ENCODE measurements at regions of chr3 and their contacts with region 1.

Region 1: DNA sequence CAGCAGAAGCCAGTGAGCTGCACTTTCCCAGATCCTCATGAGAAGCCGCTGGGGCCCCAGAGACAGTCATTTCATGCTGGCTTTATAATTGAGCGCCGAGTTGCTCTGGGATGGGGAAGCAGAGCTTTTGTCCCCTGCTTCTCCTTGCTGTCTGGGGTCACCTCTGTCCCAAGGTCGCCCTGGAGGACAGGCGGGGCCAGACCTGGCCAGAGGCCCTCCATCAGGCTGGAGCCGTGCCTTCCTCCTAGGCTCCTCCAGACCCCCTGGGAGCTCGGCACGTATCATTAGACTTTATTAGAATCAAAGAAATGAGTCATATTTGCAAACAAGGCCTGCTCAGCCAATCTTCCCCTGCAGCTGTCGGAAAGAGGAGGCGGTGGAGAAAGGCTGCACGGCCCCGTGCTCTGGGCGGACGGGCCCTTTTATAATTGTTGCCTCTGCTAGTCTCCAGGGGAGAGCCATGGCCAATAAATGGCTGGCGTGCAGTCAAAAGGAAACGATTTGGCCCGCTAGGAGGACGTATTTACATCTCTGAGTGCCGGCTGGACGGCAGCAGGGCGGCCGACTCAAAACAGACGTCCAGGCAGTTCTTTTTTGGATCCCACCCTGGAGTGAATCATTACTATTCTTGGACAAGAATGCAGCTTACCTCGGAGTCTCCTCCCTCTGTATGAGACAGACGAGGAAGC is 50.4 kb downstream of the SLC6A6 start:
- DNase-seq: peak; percentile 73
- ATAC-seq: peak; percentile 85
- H3K4me3 ChIP-seq: peak overlapping the region in 1 of 2 experiments; percentile 27; a peak in 2 of 4 replicates
- H3K27ac ChIP-seq: peak overlapping the region; percentile 75
- H3K4me1 ChIP-seq: peaks cover 23 to 32% of the 10 kb centered on the region in 2 experiments
- H3K27me3 ChIP-seq: no peaks in the 10 kb centered on the region
- CTCF ChIP-seq: no peak
- POLR2A ChIP-seq: no peak
- RAD21 ChIP-seq: no peak

Region 2: DNA sequence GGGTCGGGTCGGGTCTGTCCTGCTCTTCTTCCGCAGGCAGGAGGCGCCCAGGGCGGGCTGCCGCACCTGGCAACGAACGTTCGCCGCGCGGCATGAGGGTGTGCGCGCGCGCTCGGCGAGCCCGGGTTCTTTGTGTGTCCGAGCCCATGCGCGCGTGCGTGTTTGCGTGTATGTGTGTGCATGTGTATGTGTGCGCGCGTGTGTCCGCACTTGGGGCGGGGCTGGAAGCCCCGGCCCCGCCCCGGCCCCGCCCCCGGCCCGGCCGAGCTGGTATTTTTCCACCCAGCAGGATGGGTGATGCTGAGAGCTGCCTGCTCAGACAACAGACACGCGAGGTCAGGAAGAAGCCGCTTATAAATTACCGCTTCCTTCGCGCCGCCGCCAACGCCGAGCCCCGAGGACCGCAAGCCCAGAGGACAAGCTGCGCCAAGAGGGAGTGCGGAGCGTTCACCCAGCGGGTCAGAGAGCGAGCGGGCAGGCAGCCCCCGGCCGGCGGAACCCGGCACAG is 50.5 kb before region 1 on chr3 and contains the start of gene SLC6A6:
- CTCF ChIA-PET with region 1: no interaction called
- POLR2A ChIA-PET with region 1: interaction called, 3 read pairs
- RAD21 ChIA-PET with region 1: no interaction called
- intact Hi-C with region 1: loop called (anchors 2 kb)
- DNase-seq: peak; percentile 92
- ATAC-seq: peak; percentile 82
- H3K4me3 ChIP-seq: peak within 1 kb of the TSS; percentile 93 to 98
- H3K27ac ChIP-seq: peak within 1 kb of the TSS; percentile 93
- H3K4me1 ChIP-seq: peaks cover 33 to 39% of the 10 kb centered on the region in 2 experiments
- H3K27me3 ChIP-seq: no peaks in the 10 kb centered on the region
- CTCF ChIP-seq: peak in 2 of 3 experiments; percentile 37 to 51; a peak in 4 of 6 replicates
- POLR2A ChIP-seq: peak; percentile 74
- RAD21 ChIP-seq: no peak
- total RNA-seq, gene SLC6A6: 36.3 TPM

Region 3: DNA sequence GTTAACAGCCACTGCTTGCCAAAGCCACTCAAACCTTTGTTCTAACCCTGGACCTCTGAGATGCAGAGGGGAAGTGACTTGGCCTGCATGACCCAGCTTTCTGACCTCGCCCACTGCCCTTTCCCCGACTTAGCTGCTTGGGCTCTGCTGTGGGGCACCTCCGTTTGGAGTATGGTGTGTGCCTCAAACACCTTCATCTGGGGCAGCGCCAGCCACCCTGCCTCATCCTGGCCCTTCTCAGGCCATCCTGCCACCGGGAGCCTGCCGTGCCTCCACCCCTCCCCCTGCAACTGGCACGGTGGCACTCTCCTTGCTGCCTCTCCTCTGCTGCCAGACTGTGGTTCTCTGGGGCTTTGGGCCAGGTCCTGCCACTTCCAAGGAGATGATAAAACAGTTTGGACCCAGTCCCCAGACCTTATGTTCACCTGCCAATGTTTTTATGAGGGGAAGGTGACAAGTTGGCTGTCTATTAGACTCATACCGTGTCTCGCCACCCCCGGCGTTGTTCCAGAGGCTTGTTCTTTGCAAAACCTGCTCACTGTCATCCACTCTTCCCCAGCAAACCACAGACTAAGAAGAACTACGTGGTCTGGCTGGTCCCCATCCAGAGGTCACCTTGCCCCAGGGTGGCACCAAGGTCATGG is 18.2 kb before region 1 on chr3:
- CTCF ChIA-PET with region 1: no interaction called
- POLR2A ChIA-PET with region 1: no interaction called
- RAD21 ChIA-PET with region 1: no interaction called
- intact Hi-C with region 1: no loop called
- DNase-seq: no peak
- ATAC-seq: no peak
- H3K4me3 ChIP-seq: no peak overlapping the region
- H3K27ac ChIP-seq: no peak overlapping the region
- H3K4me1 ChIP-seq: peaks cover 50 to 68% of the 10 kb centered on the region in 2 experiments
- H3K27me3 ChIP-seq: no peaks in the 10 kb centered on the region
- CTCF ChIP-seq: no peak
- POLR2A ChIP-seq: no peak
- RAD21 ChIP-seq: no peak

Region 4: DNA sequence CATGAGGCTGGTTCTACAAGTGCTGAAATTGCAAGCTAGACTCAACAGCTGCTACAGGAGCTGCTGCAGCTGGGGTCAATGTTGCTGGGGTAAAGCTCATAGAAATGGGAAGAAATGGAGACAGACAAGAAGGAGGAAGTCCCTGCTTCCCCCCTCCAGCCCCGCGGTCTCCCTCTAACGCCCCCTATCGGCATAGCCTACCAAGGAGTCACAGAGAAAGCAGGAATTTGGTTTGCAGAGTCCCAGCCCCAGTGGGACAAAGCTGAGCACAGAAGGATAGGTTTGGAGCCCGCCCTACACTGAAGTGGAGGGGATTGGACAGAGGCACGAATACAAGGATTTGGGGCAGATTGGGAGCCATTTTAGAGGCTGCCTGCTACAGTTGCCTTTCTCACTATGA is 1521.8 kb after region 1 on chr3:
- CTCF ChIA-PET with region 1: no interaction called
- POLR2A ChIA-PET with region 1: no interaction called
- RAD21 ChIA-PET with region 1: no interaction called
- intact Hi-C with region 1: no loop called
- DNase-seq: no peak
- ATAC-seq: peak; percentile 70
- H3K4me3 ChIP-seq: no peak overlapping the region
- H3K27ac ChIP-seq: no peak overlapping the region
- H3K4me1 ChIP-seq: peaks cover 10 to 12% of the 10 kb centered on the region in 2 experiments
- H3K27me3 ChIP-seq: no peaks in the 10 kb centered on the region
- CTCF ChIP-seq: peak in 2 of 3 experiments; percentile 55 to 59; a peak in 4 of 6 replicates
- POLR2A ChIP-seq: no peak
- RAD21 ChIP-seq: peak; percentile 12; the same call in 1 of the 2 replicates